ENCODE measurements at regions of chr3 and their contacts with region 1.

Region 1: GRCh38 chr3:13019243-13020095 is 53.8 kb downstream of the IQSEC1 start:
- DNase-seq: peak; percentile 76
- ATAC-seq: peak; percentile 69
- H3K4me3 ChIP-seq: no peak overlapping the region
- H3K27ac ChIP-seq: no peak overlapping the region
- H3K4me1 ChIP-seq: peaks cover 32% of the 10 kb centered on the region
- H3K27me3 ChIP-seq: no peaks in the 10 kb centered on the region
- CTCF ChIP-seq: no peak
- POLR2A ChIP-seq: no peak
- RAD21 ChIP-seq: no peak

Region 2: DNA sequence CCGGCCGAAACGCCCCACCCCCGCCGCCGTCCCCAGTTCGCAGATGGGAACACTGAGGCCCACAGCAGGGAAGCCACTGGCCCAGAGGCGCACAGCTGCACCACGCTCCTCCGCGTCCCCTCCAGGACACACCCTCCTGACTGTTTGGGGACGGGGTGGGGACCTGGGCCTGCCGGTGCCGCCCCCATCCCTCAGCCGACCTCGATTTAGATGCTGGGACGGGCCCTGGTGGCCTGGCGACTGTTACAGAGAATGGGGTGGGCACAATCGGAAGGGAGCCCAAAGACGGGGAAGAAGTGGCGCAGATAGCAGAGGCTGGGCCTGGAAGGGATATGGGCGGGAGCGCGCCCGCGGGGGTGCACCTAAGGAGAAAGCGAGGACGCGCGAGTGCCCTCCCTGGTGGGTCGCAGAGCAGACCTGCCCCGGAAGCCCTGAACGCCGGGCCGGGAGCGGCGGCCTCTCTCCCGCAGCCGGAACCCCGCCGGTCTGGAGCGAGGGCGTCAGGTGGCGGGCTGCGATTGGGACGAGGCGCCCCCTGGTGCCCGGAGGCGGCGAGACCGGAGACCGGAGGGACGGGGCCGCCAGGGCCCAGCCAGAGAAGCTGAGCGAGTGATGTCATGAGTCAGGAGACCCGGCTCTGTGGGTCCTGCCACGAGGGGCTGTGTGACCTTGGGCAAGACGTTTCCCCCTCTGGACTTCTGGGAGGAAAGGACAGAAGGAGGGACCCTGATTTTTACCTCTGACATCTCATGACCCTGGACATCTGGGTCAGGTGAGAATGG is 24.7 kb before region 1 on chr3:
- CTCF ChIA-PET with region 1: no interaction called
- POLR2A ChIA-PET with region 1: no interaction called
- dilution Hi-C with region 1: no loop called
- in situ Hi-C with region 1: no loop called
- intact Hi-C with region 1: loop called (anchors 2 kb)
- DNase-seq: peak; percentile 72
- ATAC-seq: peak; percentile 69
- H3K4me3 ChIP-seq: peak overlapping the region; percentile 63
- H3K27ac ChIP-seq: peak overlapping the region; percentile 95
- H3K4me1 ChIP-seq: peaks cover 37% of the 10 kb centered on the region
- H3K27me3 ChIP-seq: no peaks in the 10 kb centered on the region
- CTCF ChIP-seq: peak; percentile 94
- POLR2A ChIP-seq: no peak; the same call in 1 of the 2 replicates
- RAD21 ChIP-seq: peak; percentile 64

Region 3: GRCh38 chr3:13229273-13229949 is 209.9 kb after region 1 on chr3:
- CTCF ChIA-PET with region 1: no interaction called
- POLR2A ChIA-PET with region 1: no interaction called
- dilution Hi-C with region 1: no loop called
- in situ Hi-C with region 1: no loop called
- intact Hi-C with region 1: no loop called
- DNase-seq: peak; percentile 7
- ATAC-seq: no peak
- H3K4me3 ChIP-seq: no peak overlapping the region
- H3K27ac ChIP-seq: no peak overlapping the region
- H3K4me1 ChIP-seq: no peaks in the 10 kb centered on the region
- H3K27me3 ChIP-seq: peaks cover 18% of the 10 kb centered on the region
- CTCF ChIP-seq: peak; percentile 32
- POLR2A ChIP-seq: no peak
- RAD21 ChIP-seq: peak; percentile 19; the same call in 1 of the 2 replicates